Heart right ventricle (tissue), 16 donors: ENCODE measurements at regions of chr2 and their contacts with region 1.

Region 1: GRCh38 chr2:46666044-46666679 is 186.8 kb downstream of the TMEM247 start:
- DNase-seq: peak; percentile 77 to 85
- ATAC-seq: peak; percentile 56 to 87 (median 72)
- H3K4me3 ChIP-seq: no peak overlapping the region
- H3K27ac ChIP-seq: peak overlapping the region in 4 of 10 donors; percentile 38 to 73 (median 59)
- H3K4me1 ChIP-seq: peaks cover 0 to 55% (median 34%) of the 10 kb centered on the region in 9 donors
- H3K27me3 ChIP-seq: no peaks in the 10 kb centered on the region
- CTCF ChIP-seq: no peak

Region 2: DNA sequence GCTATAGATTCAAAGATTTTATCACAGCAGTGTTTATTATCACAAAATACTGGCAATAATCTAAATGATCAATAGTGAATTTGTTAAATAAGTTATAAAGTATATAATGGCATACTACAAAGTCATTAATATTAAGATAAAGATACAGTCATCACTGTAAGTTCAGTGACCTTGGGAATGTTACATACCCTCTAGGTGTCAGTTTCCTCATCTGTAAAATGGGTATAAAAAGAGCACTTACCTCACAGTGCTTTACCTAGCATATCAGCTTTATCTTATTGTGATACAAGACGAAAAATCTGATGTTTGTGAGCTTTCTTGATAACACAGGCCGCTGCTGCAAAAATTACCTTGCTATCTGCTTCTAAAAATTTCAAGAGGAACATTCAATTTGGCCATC is 74.6 kb before region 1 on chr2:
- intact Hi-C with region 1: no loop called
- DNase-seq: no peak
- ATAC-seq: no peak
- H3K4me3 ChIP-seq: no peak overlapping the region
- H3K27ac ChIP-seq: no peak overlapping the region
- H3K4me1 ChIP-seq: peaks cover 0 to 4% (median 0%) of the 10 kb centered on the region in 9 donors
- H3K27me3 ChIP-seq: no peaks in the 10 kb centered on the region
- CTCF ChIP-seq: no peak

Region 3: DNA sequence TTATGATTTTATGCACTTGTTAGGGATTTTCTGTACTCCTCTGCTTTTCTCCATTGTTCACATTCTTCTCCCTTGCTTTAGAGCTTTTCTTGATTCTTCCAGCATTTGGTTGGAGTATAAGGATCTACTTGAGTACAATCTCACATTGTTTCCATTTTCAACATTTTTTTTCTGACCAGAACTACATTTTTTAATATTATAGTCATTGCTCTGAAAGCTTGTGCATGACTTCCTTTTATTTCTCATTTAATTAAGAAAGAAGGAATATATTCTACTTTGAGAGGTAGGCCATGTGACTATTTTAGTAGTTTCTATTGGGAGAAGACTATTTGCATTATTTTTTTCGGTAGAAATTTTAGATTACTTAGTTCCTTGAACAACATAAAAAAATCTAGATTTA is 13.6 kb after region 1 on chr2:
- intact Hi-C with region 1: loop called in 1 of 10 experiments (anchors 1 kb)
- DNase-seq: no peak
- ATAC-seq: no peak
- H3K4me3 ChIP-seq: no peak overlapping the region
- H3K27ac ChIP-seq: no peak overlapping the region
- H3K4me1 ChIP-seq: peaks cover 0 to 8% (median 0%) of the 10 kb centered on the region in 9 donors
- H3K27me3 ChIP-seq: no peaks in the 10 kb centered on the region
- CTCF ChIP-seq: no peak